ENCODE measurements at regions of chr4 and their contacts with region 1.

Region 1: GRCh38 chr4:122814426-122814825 is 12.2 kb upstream of the FGF2 start:
- DNase-seq: no peak
- H3K4me3 Mint-ChIP-seq: no peak overlapping the region
- H3K27ac Mint-ChIP-seq: peak overlapping the region; percentile 70
- H3K4me1 Mint-ChIP-seq: peaks cover 10% of the 10 kb centered on the region
- H3K27me3 Mint-ChIP-seq: peaks cover 9% of the 10 kb centered on the region

Region 2: GRCh38 chr4:122772311-122772710 is 42.1 kb before region 1 on chr4:
- intact Hi-C with region 1: no loop called
- DNase-seq: no peak
- H3K4me3 Mint-ChIP-seq: no peak overlapping the region
- H3K27ac Mint-ChIP-seq: no peak overlapping the region
- H3K4me1 Mint-ChIP-seq: no peaks in the 10 kb centered on the region
- H3K27me3 Mint-ChIP-seq: no peaks in the 10 kb centered on the region

Region 3: DNA sequence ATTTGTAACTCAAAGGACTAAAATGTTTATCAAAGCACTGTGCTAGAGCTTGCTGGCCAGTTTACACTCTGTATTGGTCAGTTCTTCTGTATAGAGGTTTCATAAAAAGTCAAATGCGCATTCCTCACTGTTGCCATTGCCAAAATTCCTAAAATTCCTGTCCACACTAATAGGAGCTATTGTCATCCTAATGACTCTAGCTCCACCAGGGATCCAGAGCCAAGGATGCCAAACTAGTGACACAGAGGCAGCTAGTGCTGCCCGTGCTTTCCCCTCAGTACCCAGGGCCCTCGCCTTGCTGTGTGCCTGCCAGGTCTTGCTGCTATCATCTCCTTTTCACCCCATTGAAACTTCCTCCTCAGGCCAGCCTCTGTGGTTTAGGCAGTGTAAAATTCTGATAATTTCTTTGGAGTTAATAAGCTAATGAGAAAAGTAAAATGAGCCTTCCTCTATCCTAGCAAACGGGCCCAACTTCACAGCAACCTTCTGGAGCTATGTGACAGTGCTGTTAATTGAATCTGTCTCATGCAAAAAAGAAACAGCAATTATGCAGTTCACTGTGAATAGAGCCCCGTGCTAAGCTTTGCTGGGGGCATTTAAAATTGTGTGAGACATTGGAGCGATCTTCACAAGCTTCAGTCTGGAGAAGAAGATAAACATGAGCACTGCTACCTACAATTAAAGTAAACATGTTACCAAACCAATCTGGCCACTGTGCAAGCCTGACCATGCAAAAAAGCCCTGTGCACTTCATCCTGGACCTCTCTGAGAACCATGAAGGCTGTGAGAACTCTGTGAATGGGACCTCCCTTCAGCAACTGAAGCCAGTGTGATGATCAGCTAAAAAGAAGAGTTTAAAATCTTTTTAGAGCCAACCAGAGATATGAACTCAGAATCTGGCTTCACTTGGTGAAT is 30.9 kb before region 1 on chr4:
- intact Hi-C with region 1: loop called (anchors 1 kb)
- DNase-seq: peak; percentile 52
- H3K4me3 Mint-ChIP-seq: no peak overlapping the region
- H3K27ac Mint-ChIP-seq: no peak overlapping the region
- H3K4me1 Mint-ChIP-seq: peaks cover 23% of the 10 kb centered on the region
- H3K27me3 Mint-ChIP-seq: no peaks in the 10 kb centered on the region